HEK293 (cell line): ENCODE measurements at regions of chr2 and their contacts with region 1.

Region 1: DNA sequence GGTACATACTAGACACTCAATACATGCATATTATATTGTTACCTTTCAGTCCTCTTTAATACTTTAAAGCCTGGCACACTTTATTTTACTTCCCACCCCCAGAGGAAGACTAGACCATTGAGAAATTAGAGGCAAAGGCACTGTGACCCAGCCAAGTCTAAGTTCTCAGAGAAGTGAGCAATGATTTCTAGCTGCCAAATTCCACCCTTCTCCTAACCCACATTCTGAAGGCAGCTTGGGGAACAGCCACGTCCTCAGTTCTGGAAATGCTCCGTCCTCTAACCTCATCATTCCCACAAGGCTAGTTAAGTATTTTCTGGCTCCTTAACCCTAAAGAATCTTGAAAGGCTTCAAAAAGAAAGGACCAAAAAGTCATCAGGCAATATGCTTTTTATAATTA is 86.6 kb downstream of the COL5A2 start:
- H3K4me3 ChIP-seq: no peak overlapping the region
- H3K27ac ChIP-seq: no peak overlapping the region
- H3K4me1 ChIP-seq: no peaks in the 10 kb centered on the region
- CTCF ChIP-seq: no peak

Region 2: DNA sequence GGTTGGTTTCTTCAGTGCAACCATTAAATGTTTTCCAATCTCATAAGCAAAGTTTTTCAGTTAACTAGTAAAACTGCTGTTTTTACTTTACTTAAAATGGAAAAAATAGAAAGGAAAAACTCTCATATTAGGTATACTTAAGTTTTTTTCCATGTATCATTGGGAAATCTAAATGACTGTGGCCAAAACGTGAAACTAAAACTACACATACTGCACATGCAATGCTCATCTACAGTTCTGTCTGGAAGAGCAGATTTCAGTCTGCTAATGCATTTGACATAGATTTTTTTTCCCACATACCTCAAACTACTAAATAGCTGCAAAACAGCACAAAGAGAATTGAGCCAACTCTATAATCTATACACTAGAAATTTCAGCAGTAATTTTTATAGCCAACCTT is 24.0 kb after region 1 on chr2:
- CTCF ChIA-PET with region 1: interaction called, 10 read pairs
- POLR2A ChIA-PET with region 1: no interaction called
- H3K4me3 ChIP-seq: no peak overlapping the region
- H3K27ac ChIP-seq: no peak overlapping the region
- H3K4me1 ChIP-seq: no peaks in the 10 kb centered on the region
- CTCF ChIP-seq: no peak

Region 3: GRCh38 chr2:189287982-189288521 is 195.1 kb after region 1 on chr2:
- CTCF ChIA-PET with region 1: interaction called, 38 read pairs
- POLR2A ChIA-PET with region 1: no interaction called
- H3K4me3 ChIP-seq: no peak overlapping the region
- H3K27ac ChIP-seq: no peak overlapping the region
- H3K4me1 ChIP-seq: no peaks in the 10 kb centered on the region
- CTCF ChIP-seq: peak; percentile 72

Region 4: DNA sequence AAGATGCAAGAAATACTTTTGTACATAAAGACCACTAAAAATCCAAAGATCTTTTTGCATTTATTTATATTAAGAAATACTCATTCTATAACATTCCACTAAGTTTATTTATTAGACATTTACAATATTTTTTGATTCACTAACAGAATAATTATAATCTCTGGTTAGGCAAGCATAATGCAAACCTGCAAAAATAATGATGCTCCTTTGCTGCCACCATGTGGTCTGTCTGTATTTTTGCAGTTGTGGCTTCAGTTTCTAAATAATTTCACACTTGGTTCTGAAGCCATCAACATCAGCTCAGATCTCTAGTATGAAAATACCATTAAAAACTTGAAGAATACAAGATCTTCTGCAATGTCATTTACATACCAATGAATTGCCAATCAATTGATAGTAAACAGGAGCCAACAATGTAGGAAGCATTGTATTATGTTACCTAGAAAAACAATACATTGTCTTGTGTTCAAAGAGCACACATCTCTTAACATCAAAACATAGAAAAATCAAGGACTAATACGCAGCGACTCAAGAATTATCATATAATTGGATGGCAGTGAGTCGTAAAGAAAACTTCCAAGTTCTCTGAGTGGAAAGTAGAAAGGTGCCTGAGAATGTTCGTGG is 319.5 kb after region 1 on chr2:
- CTCF ChIA-PET with region 1: interaction called, 25 read pairs
- POLR2A ChIA-PET with region 1: no interaction called
- H3K4me3 ChIP-seq: no peak overlapping the region
- H3K27ac ChIP-seq: no peak overlapping the region
- H3K4me1 ChIP-seq: 0 out of 2 replicates have a peak, but pooled peaks cover under 1% of the 10 kb centered on the region
- CTCF ChIP-seq: 0 out of 2 replicates have a peak, but pooled peaks have one; percentile 26